SK-MEL-5 (cell line): ENCODE measurements at regions of chr11 and their contacts with region 1.

Region 1: DNA sequence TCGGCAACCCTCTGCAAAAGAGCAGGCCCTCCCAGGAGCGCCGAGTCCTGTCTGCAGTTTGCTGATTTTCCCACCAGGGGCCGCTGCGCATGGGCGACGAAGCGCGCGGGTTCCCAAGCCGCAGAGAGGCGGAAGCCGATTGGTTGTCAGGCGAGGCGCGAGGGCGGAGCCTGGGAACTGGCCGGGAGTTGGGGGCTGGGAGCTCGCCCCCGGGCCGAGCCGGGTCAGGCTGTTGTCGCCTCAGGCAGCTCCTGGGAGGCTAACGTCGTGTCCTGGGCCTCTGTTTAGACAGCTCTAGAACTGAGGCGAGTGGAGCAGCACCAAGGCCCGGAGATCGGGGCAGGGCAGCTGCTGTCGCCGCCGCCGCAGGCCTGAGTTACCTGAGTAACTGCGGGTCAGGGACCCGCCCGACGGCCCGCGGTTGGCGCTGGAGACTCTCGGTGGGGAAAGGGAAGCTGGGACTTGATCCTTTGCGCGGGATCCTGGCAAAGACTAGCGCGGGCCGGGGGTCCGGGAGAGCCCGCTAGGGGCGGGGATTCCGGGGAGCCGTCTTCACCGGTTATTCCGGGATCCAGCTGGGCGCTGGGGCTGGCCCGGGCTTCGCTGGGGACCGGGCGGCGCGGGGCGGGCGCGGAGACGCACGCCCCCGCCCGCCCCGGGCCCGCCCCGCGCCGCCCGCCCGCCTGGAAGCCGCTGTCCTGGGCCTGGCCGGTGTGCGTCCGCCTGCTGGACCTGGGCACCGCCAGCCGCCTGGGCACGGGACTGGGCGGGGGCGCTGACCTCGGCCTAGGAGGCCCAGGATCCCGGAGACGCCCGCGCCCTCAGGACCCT is at the start of gene STIM1:
- DNase-seq: peak; percentile 93
- total RNA-seq, gene STIM1: 24.2 and 25.7 TPM in 2 replicates

Region 2: DNA sequence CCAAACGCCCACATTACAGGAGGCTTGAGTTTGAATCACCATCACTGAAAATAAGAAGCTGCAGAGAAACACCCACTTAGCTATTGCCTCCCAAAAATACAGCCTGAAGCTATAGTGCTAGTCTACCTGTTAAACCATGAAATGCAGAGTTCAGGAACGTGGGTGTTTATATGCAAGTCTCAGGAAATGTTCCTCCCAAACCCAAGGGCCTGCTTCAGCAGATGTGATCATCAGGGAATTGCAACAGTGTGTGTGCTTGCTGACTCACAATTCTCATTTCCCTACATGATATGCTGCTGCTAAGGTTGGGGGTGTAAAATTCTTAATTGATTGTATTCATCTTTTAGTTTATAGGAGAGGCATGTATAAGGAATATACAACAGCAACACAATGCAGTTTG is 107.5 kb before region 1 on chr11:
- in situ Hi-C with region 1: no loop called
- DNase-seq: no peak

Region 3: DNA sequence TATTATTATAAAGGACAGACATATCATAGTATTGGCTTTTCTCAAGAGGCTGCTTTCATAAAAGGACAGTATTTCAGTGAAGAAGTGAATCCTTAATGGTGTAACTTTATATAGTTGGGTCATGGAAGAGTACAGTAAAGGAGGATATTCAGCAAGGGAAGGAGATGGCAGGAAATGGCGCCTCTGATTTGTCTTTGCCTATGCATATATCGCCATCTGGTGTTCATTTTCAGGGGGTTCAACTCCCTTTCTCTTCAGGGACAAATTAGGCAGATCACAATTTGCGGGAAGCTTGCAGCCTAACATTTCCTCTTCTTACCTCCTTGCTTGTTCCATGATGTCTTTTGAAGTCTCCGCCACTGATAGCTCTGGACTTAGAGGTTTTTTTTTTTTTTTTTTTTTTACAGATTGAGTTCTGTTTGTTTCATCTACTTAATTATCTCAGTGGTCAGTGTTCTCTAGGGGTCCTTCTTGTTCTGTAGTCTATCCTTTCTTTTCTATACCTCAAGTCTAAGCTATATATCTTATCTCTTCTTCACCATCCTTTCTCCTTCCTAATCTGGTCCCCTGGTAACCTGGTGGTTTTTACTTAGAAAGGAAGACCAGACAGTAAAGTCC is 217.6 kb after region 1 on chr11:
- in situ Hi-C with region 1: loop called (anchors 25 kb)
- DNase-seq: peak; percentile 81